ENCODE measurements at regions of chr4 and their contacts with region 1.

Region 1: DNA sequence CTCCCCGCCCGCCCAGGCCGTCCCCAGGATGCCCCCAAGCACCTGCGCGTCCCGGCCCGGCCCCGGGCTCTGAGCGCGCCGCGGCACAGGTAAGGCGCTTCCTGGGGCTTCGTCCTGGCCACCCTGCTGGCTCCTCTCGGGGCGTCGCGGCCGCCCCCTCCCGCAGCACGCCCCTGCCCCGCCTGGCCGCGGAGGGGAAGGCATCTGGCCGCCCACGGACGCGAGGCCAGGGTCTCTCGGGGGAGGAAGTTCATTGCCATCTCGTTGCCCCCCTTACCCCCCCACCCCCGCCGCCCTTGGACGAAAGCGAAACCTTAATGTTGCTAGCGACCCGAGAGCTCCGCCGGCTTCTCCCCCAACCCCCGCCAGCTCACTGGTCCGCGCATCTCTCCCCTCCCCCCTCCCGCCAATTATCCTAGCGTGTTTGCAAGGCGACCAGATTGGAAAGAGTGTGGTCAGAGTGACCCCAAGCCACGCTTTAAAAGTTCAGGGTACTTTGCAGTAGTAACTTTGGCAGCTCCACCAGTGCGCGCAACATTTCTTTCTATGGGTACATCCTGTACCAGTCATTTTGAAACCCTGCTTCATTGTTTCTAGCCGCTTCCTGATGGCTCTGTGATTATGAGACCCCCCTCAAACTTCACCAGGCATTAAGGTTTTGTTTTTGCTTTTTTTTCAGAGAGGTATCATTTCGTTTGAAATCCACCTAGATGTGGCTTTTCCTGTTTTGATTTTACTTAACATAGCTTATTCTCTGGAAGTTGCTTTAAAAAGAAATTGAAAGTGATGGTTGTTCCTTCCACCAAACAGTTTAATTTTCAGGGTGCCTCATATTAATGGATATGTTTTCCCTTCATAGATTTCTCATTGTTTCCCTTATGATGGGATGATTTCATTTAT is 626 bp downstream of the TBC1D1 start:
- H3K4me3 ChIP-seq: peak overlapping the region; percentile 64
- H3K27ac ChIP-seq: peak overlapping the region; percentile 58; the same call in 1 of the 2 replicates
- H3K4me1 ChIP-seq: no peaks in the 10 kb centered on the region
- CTCF ChIP-seq: no peak

Region 2: DNA sequence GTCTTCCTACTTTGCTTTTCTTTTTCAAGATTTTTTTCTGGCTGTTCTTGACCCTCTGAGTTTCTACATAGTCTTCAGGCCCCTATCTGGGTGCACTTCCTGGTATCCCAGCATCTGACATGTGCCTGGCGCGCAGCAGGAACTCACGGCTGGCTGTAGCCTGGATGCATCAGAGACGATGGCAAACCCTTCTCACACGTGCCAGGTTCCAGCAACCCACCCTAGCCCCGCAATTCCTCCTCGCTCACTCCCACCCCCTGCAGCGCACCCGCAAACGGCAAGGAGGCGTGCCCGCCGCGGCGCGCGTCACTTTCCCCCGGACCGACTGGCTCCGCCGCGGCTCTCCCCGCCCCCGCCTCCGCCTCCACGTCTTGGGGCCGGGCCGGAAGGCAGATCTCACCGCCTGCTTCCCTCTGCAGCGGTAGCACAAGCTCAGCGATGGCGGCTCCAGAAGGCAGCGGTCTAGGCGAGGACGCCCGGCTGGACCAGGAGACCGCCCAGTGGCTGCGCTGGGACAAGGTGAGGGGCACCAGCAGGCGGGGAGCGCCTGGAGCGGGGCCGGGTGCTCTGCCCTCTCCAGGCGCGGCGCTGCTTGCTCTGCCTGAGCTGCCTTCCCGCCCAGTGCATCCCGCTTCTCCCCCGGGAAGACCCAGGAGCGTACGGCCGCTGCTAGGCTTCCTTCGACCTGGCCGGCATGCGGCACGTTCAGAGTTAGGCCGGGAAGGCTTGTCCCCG is 65.0 kb before region 1 on chr4 and contains the start of gene PGM2:
- CTCF ChIA-PET with region 1: no interaction called
- POLR2A ChIA-PET with region 1: interaction called, 10 read pairs
- H3K4me3 ChIP-seq: peak within 1 kb of the TSS; percentile 85
- H3K27ac ChIP-seq: peak within 1 kb of the TSS; percentile 72
- H3K4me1 ChIP-seq: 0 out of 2 replicates have a peak, but pooled peaks cover 7% of the 10 kb centered on the region
- CTCF ChIP-seq: peak; percentile 62

Region 3: DNA sequence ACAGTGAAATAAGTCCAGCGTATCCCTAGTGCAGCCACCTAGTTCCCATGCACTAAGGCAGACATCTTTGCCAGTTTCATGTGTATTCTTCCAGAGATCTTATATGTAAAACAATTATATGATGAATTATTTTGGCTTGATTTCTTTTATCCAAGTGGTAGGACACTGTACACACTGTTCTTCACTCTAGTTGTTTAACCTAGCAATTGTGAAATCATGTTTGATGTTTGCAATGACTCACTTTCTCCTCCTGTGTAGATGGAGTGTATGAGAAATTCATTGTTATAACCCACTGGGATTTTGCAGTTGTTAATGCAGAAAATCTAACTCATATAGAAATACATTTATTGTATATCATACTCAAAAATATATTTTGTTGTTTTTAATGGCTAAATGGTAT is 18.1 kb before region 1 on chr4:
- CTCF ChIA-PET with region 1: no interaction called
- POLR2A ChIA-PET with region 1: no interaction called
- H3K4me3 ChIP-seq: no peak overlapping the region
- H3K27ac ChIP-seq: no peak overlapping the region
- H3K4me1 ChIP-seq: peaks cover 4% of the 10 kb centered on the region
- CTCF ChIP-seq: no peak